IMR-90 (cell line): ENCODE measurements at regions of chr11 and their contacts with region 1.

Region 1: DNA sequence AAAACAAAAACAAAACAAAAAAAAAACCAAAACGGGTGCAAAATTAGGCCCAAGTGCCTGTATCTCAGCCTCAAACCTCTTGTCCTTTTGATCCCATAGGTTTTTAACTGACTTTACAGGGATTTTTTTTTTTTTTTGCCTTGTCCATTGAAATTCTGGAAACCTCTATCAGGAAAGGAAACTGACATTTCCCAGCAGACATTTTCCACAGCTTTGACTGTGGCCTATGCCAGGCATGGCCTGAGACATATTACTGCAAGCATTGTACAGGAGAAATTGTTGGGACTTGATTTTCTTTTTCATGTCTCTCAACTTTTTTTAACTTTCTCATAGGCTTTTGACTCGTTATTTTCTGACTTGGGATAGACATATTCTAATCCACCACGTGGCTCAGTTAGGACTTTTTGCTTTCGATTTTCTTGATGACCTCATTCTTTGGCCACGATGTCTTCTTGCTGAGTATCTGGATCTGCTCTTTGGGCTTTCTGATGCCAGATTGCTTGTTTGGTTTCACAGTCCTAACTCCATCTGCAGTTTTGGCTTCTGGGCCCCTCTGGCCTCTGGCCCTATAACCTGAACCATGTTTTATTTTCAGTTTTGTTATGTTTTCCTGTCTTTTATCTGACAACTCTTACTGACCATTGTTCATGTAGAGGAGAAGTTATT is 336.1 kb upstream of the C11orf87 start:
- DNase-seq: peak; percentile 41
- ATAC-seq: peak; percentile 35
- H3K4me3 ChIP-seq: no peak overlapping the region
- H3K27ac ChIP-seq: no peak overlapping the region
- H3K4me1 ChIP-seq: no peaks in the 10 kb centered on the region
- H3K27me3 ChIP-seq: no peaks in the 10 kb centered on the region
- CTCF ChIP-seq: no peak
- POLR2A ChIP-seq: no peak
- RAD21 ChIP-seq: no peak

Region 2: DNA sequence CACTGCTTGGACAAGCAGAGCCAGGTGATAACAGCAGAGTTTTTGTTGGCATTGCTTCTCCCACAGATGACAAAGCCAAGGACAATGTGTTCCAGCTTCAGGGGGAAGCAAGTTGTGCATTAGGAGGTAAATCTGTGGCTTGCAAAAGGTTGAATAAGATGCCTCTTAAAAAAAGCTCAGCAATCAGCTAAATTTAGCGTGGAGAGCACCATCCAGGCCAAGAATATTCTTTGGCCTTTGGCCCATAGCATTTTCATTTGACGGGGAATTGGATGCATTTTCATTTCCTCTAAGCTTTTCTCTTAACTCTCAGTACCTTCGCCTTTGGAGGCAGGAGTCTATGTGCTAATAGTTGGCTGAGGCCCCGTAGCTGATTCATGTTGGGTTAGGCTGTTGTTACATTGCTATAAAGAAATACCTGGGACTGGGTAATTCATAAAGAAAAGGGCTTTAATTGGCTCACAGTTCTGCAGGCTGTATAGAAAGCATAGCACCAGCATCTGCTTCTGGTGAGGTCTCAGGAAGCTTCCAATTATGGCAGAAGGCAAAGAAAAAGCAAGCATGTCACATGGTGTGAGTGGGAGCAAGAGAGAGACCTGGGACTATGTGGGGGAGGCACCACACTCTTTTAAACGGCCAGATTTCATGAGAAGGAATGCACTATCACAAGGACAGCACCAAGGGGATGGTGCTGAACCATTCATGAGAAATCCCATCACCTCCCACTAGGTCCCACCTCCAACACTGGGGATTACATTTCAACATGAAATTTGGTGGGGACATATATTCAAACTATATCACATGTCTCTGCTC is 13.9 kb before region 1 on chr11:
- CTCF ChIA-PET with region 1: interaction called, 3 read pairs
- POLR2A ChIA-PET with region 1: no interaction called
- dilution Hi-C with region 1: no loop called
- in situ Hi-C with region 1: no loop called
- intact Hi-C with region 1: loop called (anchors 1 kb)
- DNase-seq: peak; percentile 46
- ATAC-seq: no peak
- H3K4me3 ChIP-seq: no peak overlapping the region
- H3K27ac ChIP-seq: no peak overlapping the region
- H3K4me1 ChIP-seq: no peaks in the 10 kb centered on the region
- H3K27me3 ChIP-seq: peaks cover 13% of the 10 kb centered on the region; the same call in 1 of the 2 replicates
- CTCF ChIP-seq: no peak
- POLR2A ChIP-seq: no peak
- RAD21 ChIP-seq: no peak